Calu3 (cell line): ENCODE measurements at regions of chr3 and their contacts with region 1.

Region 1: DNA sequence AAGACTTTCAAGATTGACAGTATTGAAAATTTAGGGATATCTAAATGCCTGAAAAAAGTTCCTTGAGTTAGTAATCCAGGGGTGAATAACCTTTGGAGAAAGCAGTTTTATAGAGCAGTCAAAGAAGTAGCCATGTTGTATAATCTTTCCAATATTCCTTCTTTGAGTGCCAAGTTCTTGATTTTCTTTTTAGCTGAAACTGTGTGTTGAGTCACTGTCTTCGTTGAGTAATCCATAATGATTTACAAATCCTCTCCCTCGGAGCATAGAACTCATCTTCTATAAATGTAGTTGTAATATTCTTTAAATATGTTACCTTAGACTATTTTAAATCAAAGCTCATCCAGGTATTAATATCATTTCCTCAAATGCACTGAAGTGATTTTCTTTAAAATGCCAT is 135.2 kb downstream of the BBX start:
- DNase-seq: no peak
- H3K4me3 Mint-ChIP-seq: no peak overlapping the region
- H3K27ac Mint-ChIP-seq: no peak overlapping the region
- H3K4me1 Mint-ChIP-seq: no peaks in the 10 kb centered on the region
- H3K27me3 Mint-ChIP-seq: no peaks in the 10 kb centered on the region
- CTCF ChIP-seq: no peak

Region 2: DNA sequence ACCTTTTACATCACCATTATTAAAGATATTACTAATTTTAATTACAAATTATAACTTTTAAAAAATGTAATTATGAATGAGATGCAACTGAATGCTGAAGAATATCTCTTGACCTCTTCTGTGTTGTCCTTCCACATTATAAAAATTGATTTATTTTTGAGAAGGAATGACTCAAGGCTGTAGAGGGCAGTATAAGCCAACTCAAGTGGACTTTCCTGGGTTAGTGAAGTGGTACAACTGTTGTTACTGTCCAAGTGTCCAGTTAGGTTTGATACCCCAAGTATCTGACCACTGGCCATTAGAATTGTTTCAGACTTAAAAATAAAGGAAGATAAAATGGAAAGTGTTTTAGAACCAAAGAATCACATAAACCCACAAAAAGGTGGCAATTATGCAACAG is 83.3 kb before region 1 on chr3:
- CTCF ChIA-PET with region 1: interaction called, 4 read pairs
- intact Hi-C with region 1: loop called (anchors 2 kb)
- DNase-seq: no peak
- H3K4me3 Mint-ChIP-seq: no peak overlapping the region
- H3K27ac Mint-ChIP-seq: no peak overlapping the region
- H3K4me1 Mint-ChIP-seq: no peaks in the 10 kb centered on the region
- H3K27me3 Mint-ChIP-seq: no peaks in the 10 kb centered on the region
- CTCF ChIP-seq: peak; percentile 29

Region 3: GRCh38 chr3:107598926-107599771 is 58.8 kb before region 1 on chr3:
- CTCF ChIA-PET with region 1: no interaction called
- intact Hi-C with region 1: no loop called
- DNase-seq: peak; percentile 35
- H3K4me3 Mint-ChIP-seq: peak overlapping the region; percentile 69
- H3K27ac Mint-ChIP-seq: peak overlapping the region; percentile 62
- H3K4me1 Mint-ChIP-seq: peaks cover 18% of the 10 kb centered on the region
- H3K27me3 Mint-ChIP-seq: no peaks in the 10 kb centered on the region
- CTCF ChIP-seq: no peak